ENCODE measurements at regions of chr10 and their contacts with region 1.

Region 1: DNA sequence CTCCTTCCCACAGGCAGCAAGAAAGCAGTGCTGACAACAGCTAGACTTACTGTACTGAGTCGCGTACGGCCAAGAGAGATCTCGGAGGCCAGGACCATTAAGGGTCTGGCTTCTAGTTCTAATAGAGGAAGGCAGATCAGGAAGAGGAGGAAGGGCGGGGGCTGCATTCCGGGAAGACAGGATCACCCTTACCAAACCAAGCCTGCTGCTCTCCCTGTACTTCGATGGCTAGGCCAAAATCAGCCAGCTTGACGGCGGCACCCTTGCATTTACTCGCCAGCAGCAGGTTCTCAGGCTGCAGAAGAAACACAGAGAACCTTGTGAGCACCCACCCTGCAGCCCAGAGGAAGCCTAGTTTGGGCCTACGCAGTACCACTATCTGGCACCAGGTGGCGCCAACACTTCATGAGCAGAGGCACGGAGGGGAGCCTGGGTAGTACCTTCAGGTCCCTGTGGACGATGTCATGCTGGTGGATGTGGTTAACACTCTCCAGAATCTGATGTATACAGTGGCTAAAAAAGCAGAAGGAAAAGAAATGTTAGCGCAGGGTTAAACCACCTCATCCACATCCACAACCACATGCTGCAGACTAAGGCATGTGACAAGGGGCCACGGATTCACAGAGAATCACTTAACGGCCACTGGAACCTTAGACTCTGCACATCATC is 25.4 kb downstream of the CAMK2G start:
- DNase-seq: peak; percentile 84 to 94 (median 92)
- ATAC-seq: peak; percentile 77 to 93
- H3K4me3 ChIP-seq: no peak overlapping the region
- H3K27ac ChIP-seq: peak overlapping the region; percentile 2
- H3K4me1 ChIP-seq: no peaks in the 10 kb centered on the region
- H3K27me3 ChIP-seq: no peaks in the 10 kb centered on the region

Region 2: DNA sequence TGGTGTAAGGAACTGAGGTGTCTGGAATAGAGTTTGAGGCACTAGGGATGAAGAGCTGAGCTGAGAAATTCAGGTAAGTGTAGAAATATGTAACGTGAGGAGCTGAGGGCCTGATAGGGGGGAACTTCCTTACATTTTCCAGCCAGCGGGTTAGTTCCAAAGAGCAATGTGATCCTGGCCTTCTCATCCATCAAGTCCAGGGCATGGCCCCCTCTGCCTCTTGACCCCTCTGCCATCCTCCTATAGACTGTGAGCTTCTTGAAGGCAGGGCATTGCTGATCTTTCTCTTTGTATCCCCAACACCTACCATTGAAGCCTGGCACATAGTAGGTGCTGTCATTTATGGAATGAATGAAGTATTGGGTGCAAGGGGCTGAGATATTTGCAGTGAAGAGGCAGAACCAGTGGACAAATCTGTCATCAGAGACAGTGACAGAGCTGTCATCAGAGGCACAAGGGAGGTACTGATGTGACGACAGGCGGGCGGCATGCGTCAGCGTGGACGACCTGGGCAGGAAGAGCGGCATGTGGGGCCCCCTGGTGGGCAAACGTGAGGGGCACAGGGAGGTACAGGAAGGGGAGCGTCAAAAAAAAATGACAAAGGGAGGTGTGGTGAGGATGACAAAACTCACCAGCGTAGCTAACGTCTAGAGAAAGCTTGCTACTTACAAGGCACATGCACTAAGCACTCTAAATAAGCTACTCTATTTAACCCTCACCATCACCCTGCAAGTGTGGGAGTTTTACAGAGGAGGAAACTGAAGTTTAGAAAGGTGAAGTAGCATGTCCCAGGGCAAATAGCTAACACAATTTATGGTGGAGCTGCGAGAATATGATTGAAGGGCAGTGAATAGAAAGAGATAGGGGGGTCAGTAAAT is 30.6 kb after region 1 on chr10:
- intact Hi-C with region 1: loop called in 3 of 4 experiments (anchors 2 kb)
- DNase-seq: peak; percentile 89 to 95 (median 95)
- ATAC-seq: peak; percentile 92
- H3K4me3 ChIP-seq: no peak overlapping the region
- H3K27ac ChIP-seq: no peak overlapping the region
- H3K4me1 ChIP-seq: no peaks in the 10 kb centered on the region
- H3K27me3 ChIP-seq: no peaks in the 10 kb centered on the region